Common myeloid progenitor, CD34-positive (primary cell): ENCODE measurements at regions of chr7 and their contacts with region 1.

Region 1: DNA sequence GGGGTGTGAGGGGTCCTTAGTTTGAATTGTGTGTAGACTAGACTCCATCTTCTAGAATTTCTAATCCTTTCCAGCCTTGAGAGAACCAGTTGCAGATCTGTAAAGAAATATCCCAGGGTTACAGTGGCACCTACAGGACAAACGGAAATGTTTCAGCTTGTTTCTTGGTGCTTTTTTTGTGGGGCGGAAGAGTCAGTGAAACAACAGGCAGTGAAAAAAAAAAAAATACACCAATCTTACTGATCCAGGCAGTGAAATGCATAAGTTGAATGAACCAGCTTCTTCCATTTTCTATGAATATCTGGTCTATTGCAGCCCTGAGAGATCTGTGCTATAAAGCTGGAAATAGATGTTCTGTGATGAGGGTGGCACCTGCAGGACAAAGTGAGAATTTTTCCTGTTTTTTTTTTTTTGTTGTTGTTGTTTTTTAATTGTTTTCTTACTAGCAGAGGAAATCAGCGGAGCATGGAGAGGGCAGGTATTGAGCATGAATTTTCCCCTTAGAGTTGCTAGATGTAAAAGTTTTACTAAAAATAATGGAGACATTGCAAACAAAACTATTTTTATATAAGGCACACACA is 81.9 kb upstream of the DYNC1I1 start:
- DNase-seq: peak; percentile 67 to 84 (median 80)
- H3K4me3 ChIP-seq: peak overlapping the region in 4 of 7 experiments; percentile 14 to 57 (median 24)
- H3K27ac ChIP-seq: no peak overlapping the region
- H3K4me1 ChIP-seq: no peaks in the 10 kb centered on the region
- H3K27me3 ChIP-seq: no peaks in the 10 kb centered on the region

Region 2: GRCh38 chr7:94949532-94949931 is 740.9 kb before region 1 on chr7:
- CTCF ChIA-PET with region 1: no interaction called
- POLR2A ChIA-PET with region 1: no interaction called
- DNase-seq: no peak
- H3K4me3 ChIP-seq: no peak overlapping the region
- H3K27ac ChIP-seq: no peak overlapping the region
- H3K4me1 ChIP-seq: no peaks in the 10 kb centered on the region
- H3K27me3 ChIP-seq: no peaks in the 10 kb centered on the region

Region 3: GRCh38 chr7:95476904-95477594 is 213.4 kb before region 1 on chr7:
- CTCF ChIA-PET with region 1: interaction called, 16 read pairs
- POLR2A ChIA-PET with region 1: no interaction called
- DNase-seq: peak; percentile 67 to 80 (median 78)
- H3K4me3 ChIP-seq: no peak overlapping the region
- H3K27ac ChIP-seq: no peak overlapping the region
- H3K4me1 ChIP-seq: no peaks in the 10 kb centered on the region
- H3K27me3 ChIP-seq: no peaks in the 10 kb centered on the region

Region 4: GRCh38 chr7:95511716-95512260 is 178.7 kb before region 1 on chr7:
- CTCF ChIA-PET with region 1: interaction called, 187 read pairs
- POLR2A ChIA-PET with region 1: no interaction called
- DNase-seq: peak; percentile 88 to 94 (median 93)
- H3K4me3 ChIP-seq: peak overlapping the region in 2 of 7 experiments; percentile 14 to 16
- H3K27ac ChIP-seq: no peak overlapping the region
- H3K4me1 ChIP-seq: peaks cover 0 to 20% (median 9%) of the 10 kb centered on the region in 4 experiments
- H3K27me3 ChIP-seq: no peaks in the 10 kb centered on the region

Region 5: GRCh38 chr7:95527033-95527775 is 163.3 kb before region 1 on chr7:
- CTCF ChIA-PET with region 1: interaction called, 309 read pairs
- POLR2A ChIA-PET with region 1: no interaction called
- DNase-seq: peak; percentile 42 to 71 (median 63)
- H3K4me3 ChIP-seq: no peak overlapping the region
- H3K27ac ChIP-seq: no peak overlapping the region
- H3K4me1 ChIP-seq: peaks cover 0 to 10% (median 5%) of the 10 kb centered on the region in 4 experiments
- H3K27me3 ChIP-seq: no peaks in the 10 kb centered on the region

Region 6: DNA sequence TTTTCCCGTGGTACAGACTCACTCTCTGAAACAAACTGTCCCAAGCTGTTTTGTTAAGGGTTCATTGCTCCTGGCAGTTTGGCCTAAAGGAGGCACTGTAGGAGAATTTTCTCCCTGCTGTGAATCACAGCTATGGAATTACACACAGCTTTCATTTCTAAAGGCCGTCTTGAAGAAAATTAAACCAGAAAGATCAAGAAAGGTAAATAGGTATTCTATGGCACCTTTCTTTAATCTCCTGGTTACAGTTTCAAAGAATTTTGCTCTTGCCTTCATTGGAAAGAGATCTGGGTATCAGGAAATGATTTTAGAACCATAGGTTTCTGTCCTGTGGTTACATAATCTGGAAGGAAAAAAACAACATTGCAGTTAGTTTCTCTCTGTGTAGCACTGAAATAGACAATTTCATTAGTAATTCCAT is 145.4 kb before region 1 on chr7:
- CTCF ChIA-PET with region 1: interaction called, 75 read pairs
- POLR2A ChIA-PET with region 1: no interaction called
- DNase-seq: peak; percentile 16 to 42 (median 33)
- H3K4me3 ChIP-seq: peak overlapping the region in 1 of 7 experiments; percentile 41
- H3K27ac ChIP-seq: no peak overlapping the region
- H3K4me1 ChIP-seq: peaks cover 0 to 3% (median 0%) of the 10 kb centered on the region in 4 experiments
- H3K27me3 ChIP-seq: no peaks in the 10 kb centered on the region

Region 7: DNA sequence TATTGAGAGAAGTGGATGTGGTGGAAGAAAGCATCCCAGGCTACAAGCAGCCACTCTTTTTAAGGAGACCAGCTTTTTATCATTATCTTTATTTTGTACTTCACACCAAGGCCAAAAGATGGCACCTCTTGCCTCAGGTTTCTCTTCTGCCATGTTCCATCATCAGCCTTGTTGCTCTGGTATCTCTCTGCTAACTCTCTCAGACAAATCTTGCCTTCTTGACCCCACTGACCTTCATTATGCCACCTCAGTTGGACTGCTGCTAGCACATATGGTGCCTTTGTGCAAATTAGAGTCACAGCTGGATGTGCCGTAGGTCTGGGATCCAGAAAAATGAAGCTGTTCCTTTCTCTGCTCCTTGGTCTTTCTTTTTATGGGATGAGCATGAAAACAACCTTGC is 34.7 kb after region 1 on chr7:
- CTCF ChIA-PET with region 1: no interaction called
- POLR2A ChIA-PET with region 1: no interaction called
- DNase-seq: no peak
- H3K4me3 ChIP-seq: no peak overlapping the region
- H3K27ac ChIP-seq: no peak overlapping the region
- H3K4me1 ChIP-seq: no peaks in the 10 kb centered on the region
- H3K27me3 ChIP-seq: peaks cover 0 to 2% (median 0%) of the 10 kb centered on the region in 5 experiments